Heart left ventricle (tissue), 16 donors: ENCODE measurements at regions of chr1 and their contacts with region 1.

Region 1: GRCh38 chr1:204041232-204041767 is 31.6 kb upstream of the SOX13 start:
- DNase-seq: peak; percentile 43 to 61 (median 52)
- ATAC-seq: peak; percentile 43 to 71 (median 60)
- H3K4me3 ChIP-seq: peak overlapping the region in 1 of 12 donors; percentile 26
- H3K27ac ChIP-seq: peak overlapping the region in 11 of 12 donors; percentile 32 to 85 (median 70)
- H3K4me1 ChIP-seq: peaks cover 0 to 56% (median 30%) of the 10 kb centered on the region in 12 donors
- H3K27me3 ChIP-seq: no peaks in the 10 kb centered on the region
- CTCF ChIP-seq: no peak
- POLR2A ChIP-seq: no peak

Region 2: GRCh38 chr1:203807196-203807595 is 234.1 kb before region 1 on chr1:
- intact Hi-C with region 1: no loop called
- DNase-seq: no peak
- ATAC-seq: no peak
- H3K4me3 ChIP-seq: no peak overlapping the region
- H3K27ac ChIP-seq: no peak overlapping the region
- H3K4me1 ChIP-seq: peaks cover 0 to 29% (median 13%) of the 10 kb centered on the region in 12 donors
- H3K27me3 ChIP-seq: no peaks in the 10 kb centered on the region
- CTCF ChIP-seq: no peak
- POLR2A ChIP-seq: no peak

Region 3: GRCh38 chr1:203888807-203889251 is 152.5 kb before region 1 on chr1:
- intact Hi-C with region 1: loop called in 1 of 10 experiments (anchors 10 kb)
- DNase-seq: no peak
- ATAC-seq: no peak
- H3K4me3 ChIP-seq: no peak overlapping the region
- H3K27ac ChIP-seq: no peak overlapping the region
- H3K4me1 ChIP-seq: peaks cover 0 to 9% (median 0%) of the 10 kb centered on the region in 12 donors
- H3K27me3 ChIP-seq: no peaks in the 10 kb centered on the region
- CTCF ChIP-seq: no peak
- POLR2A ChIP-seq: no peak

Region 4: DNA sequence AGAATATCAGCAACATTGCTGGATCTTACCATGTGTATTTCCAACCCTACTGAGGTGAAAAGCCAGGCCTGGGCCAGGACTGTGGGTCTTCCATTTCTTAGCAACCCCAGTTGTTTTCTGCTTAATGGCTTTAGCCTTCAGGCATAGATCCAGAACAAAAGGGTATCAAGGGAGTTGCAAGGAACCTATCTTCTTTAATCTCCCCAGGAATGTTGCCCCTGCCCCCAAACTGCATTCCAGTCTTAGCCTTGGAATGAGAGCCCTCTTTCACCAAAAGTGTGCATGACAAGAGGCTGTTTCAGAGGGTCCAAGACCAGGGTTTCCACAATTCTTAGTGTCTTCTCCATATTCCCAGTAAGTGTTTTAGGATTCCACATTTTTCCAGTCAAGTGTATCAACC is 56.3 kb before region 1 on chr1:
- intact Hi-C with region 1: loop called in 1 of 10 experiments (anchors 5 kb)
- DNase-seq: no peak
- ATAC-seq: no peak
- H3K4me3 ChIP-seq: no peak overlapping the region
- H3K27ac ChIP-seq: no peak overlapping the region
- H3K4me1 ChIP-seq: no peaks in the 10 kb centered on the region
- H3K27me3 ChIP-seq: no peaks in the 10 kb centered on the region
- CTCF ChIP-seq: no peak
- POLR2A ChIP-seq: no peak

Region 5: DNA sequence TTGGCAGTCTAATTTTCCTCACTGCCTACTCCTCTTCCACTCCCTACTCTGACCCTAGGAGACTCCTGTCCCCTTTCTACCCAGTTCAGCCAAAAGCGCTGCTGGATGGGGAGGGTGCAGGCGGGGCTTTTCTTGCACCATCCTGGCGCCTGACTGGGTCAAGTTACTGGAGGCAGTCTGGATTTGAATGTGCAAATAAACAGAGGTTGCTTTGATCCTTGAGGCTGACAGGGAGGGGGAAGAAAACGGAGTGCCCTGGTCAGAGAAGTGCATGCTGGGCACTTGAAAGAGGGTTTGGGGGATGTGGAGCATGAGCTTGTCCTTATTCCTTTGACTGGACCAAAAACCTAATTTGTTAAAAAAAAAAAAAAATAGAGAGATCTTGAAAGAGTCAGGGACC is 45.2 kb before region 1 on chr1:
- intact Hi-C with region 1: loop called in 1 of 10 experiments (anchors 5 kb)
- DNase-seq: no peak
- ATAC-seq: peak in 1 of 4 donors; percentile 16
- H3K4me3 ChIP-seq: no peak overlapping the region
- H3K27ac ChIP-seq: peak overlapping the region in 3 of 12 donors; percentile 1 to 46 (median 13)
- H3K4me1 ChIP-seq: peaks cover 0 to 29% (median 11%) of the 10 kb centered on the region in 12 donors
- H3K27me3 ChIP-seq: no peaks in the 10 kb centered on the region
- CTCF ChIP-seq: no peak
- POLR2A ChIP-seq: no peak

Region 6: DNA sequence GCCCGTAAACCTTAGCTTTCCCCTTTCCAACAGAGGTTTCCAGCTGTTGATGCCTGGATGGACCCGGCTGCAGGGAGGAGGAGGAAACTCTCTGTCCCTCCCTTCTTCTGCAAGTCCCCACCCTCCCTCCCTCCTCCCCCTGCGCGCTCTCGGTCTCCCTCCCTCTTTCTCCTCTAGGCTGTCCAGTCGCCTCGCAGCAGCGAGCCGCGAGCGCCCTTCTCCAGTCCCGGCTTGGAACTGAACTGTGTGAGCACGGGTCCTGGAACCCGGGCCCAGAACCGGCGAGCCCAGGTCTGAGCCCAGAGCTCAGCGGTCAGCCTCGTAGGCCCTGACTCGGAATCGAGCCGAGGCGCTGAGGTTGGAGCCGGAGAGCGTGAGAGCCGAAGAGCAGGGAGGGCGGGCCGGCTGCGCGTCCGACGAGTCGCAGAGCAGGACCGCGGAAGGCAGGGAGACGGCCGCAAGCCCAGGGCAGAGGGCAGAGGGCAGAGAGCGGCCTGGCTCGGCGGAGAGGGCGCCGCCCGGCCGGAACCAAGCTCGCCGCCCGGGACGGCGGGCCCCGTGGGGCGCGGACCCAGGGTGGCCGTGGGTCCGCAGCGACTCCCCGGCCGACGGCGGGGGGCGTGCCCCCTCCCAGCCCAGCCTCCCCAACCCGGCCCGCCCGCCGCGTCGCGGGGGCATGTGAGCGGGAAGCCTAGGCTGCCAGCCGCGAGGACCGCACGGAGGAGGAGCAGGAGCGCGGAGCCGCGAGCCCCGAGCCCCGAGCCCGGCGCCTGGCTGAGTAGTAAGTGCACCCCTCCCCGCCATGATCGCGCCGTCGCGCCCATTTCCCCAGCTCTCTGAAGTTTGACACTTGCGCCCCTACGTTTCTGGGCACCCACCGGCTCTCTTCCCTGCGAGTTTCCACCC is 31.9 kb after region 1 on chr1 and contains the start of gene SOX13:
- intact Hi-C with region 1: loop called in 1 of 10 experiments (anchors 2 kb)
- DNase-seq: peak; percentile 88 to 92 (median 90)
- ATAC-seq: peak; percentile 85 to 90 (median 86)
- H3K4me3 ChIP-seq: peak within 1 kb of the TSS; percentile 68 to 93 (median 82)
- H3K27ac ChIP-seq: peak within 1 kb of the TSS; percentile 77 to 95 (median 90)
- H3K4me1 ChIP-seq: peaks cover 0 to 53% (median 23%) of the 10 kb centered on the region in 12 donors
- H3K27me3 ChIP-seq: peaks cover 0 to 49% (median 0%) of the 10 kb centered on the region in 9 donors
- CTCF ChIP-seq: peak in 6 of 12 donors; percentile 13 to 43 (median 32)
- POLR2A ChIP-seq: peak in 1 of 2 donors; percentile 86
- total RNA-seq, gene SOX13: 8.8 to 16.0 (median 13.0) TPM